Motor neuron (in vitro differentiated cells): ENCODE measurements at regions of chr20 and their contacts with region 1.

Region 1: DNA sequence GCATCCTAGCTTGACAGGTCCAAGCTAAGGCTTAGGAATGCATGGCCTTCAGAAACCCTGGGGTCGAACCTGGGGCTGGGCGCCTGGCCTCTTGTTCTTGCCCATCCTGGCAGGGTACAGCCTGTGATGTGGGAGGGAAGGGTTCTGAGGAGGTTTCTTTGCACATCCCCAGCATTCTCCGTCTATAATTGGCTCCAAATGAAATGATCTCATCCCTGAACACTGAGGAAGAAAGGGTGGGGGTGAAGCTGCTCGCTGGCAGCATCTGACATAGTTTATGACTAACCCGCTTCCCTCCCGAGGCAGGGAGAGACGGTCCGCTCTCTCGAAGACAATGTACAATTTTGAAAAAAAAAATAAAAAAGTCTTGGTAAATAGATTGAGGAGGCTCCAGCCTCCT is 67.1 kb upstream of the ZNFX1 start:
- ATAC-seq: peak; percentile 87 to 98 (median 92)
- H3K4me3 ChIP-seq: no peak overlapping the region
- H3K27ac ChIP-seq: peak overlapping the region; percentile 54 to 56
- H3K4me1 ChIP-seq: peaks cover 18 to 23% of the 10 kb centered on the region in 2 donors

Region 2: GRCh38 chr20:49460916-49461315 is 115.9 kb after region 1 on chr20:
- in situ Hi-C with region 1: no loop called
- ATAC-seq: no peak
- H3K4me3 ChIP-seq: no peak overlapping the region
- H3K27ac ChIP-seq: no peak overlapping the region
- H3K4me1 ChIP-seq: no peaks in the 10 kb centered on the region

Region 3: GRCh38 chr20:49484180-49485140 is 139.5 kb after region 1 on chr20:
- in situ Hi-C with region 1: loop called in 1 of 9 experiments (anchors 25 kb)
- ATAC-seq: peak; percentile 90 to 94 (median 92)
- H3K4me3 ChIP-seq: peak overlapping the region; percentile 41 to 60 (median 48)
- H3K27ac ChIP-seq: no peak overlapping the region
- H3K4me1 ChIP-seq: no peaks in the 10 kb centered on the region

Region 4: DNA sequence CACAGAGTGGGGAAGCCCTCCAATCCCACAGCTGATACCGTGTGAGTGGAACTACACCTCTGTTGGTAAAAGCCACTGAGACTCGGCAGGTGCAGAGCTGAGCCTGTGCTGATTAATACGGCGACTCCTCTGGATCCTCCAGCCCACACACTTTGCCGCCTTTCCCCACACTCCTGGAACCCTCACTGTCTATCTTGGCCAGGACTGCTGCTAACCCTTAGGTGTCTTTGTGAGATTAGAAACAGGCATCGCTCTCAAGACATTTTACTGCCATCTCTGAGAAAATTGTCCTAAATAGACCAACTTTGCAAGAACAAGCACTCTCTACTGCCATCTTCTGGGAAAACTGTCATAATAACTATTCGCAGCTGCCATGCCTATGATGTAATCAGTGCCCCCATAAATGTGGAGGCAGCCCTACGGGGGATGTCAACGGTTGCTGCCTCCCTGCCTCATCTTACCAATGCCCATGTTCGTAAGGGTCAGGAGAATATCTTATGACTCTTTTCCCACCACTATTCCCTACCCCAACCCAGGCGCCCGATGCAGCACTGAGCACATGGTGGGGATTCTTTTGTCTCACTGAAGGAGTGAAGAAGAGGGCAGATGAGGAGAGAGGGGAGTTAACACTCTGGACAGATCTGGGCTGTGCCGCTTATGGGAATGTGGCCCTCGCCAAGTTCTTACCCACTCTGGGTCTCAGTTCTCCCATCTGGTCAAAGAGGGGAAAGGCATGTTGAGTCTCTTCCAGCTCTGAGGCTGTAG is 163.6 kb after region 1 on chr20:
- in situ Hi-C with region 1: loop called in 5 of 9 experiments (anchors 25 kb)
- ATAC-seq: peak in 6 of 8 experiments; percentile 20 to 89 (median 54)
- H3K4me3 ChIP-seq: no peak overlapping the region
- H3K27ac ChIP-seq: no peak overlapping the region
- H3K4me1 ChIP-seq: peaks cover 10 to 14% of the 10 kb centered on the region in 2 donors

Region 5: GRCh38 chr20:49888345-49888966 is 543.5 kb after region 1 on chr20:
- in situ Hi-C with region 1: loop called in 3 of 9 experiments (anchors 25 kb)
- ATAC-seq: peak; percentile 59 to 81 (median 68)
- H3K4me3 ChIP-seq: no peak overlapping the region
- H3K27ac ChIP-seq: peak overlapping the region; percentile 22 to 56
- H3K4me1 ChIP-seq: peaks cover 43 to 53% of the 10 kb centered on the region in 2 donors